Activated CD4-positive, alpha-beta T cell treated with anti-CD3 and anti-CD28 coated beads for 36 hours (primary cell): ENCODE measurements at regions of chr12 and their contacts with region 1.

Region 1: GRCh38 chr12:110888256-110888991 is 32.0 kb downstream of the MYL2 start:
- DNase-seq: no peak
- ATAC-seq: no peak
- H3K4me3 Mint-ChIP-seq: peak overlapping the region; percentile 80
- H3K27ac Mint-ChIP-seq: no peak overlapping the region
- H3K4me1 Mint-ChIP-seq: peaks cover 10% of the 10 kb centered on the region
- H3K27me3 Mint-ChIP-seq: peaks cover 4% of the 10 kb centered on the region

Region 2: DNA sequence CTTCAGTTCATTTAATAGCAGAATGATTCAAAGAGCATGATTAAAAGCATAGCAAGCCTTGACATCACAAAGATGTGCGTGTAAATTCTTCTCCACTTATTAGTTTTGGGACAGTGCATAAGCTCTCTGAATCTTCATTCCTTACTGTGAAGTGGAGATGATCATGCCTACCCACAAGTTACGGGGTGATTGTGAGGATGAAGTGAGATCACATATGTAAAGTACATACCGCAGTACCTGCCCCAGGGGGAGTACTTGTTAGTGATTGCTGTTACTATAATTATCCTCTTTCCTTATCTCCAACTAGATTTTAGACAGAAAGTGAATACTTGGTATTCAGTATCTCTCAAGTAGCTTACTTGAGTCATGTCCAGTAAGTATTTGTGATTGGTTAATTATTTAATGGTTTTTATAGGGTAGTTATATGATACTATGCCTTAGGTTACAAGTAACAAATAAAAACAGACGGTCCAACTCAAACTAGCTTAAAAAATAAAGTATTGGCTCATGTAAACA is 380.3 kb before region 1 on chr12:
- CTCF ChIA-PET with region 1: no interaction called
- POLR2A ChIA-PET with region 1: no interaction called
- intact Hi-C with region 1: loop called (anchors 1 to 5 kb)
- DNase-seq: no peak
- ATAC-seq: no peak
- H3K4me3 Mint-ChIP-seq: no peak overlapping the region
- H3K27ac Mint-ChIP-seq: no peak overlapping the region
- H3K4me1 Mint-ChIP-seq: no peaks in the 10 kb centered on the region
- H3K27me3 Mint-ChIP-seq: no peaks in the 10 kb centered on the region

Region 3: DNA sequence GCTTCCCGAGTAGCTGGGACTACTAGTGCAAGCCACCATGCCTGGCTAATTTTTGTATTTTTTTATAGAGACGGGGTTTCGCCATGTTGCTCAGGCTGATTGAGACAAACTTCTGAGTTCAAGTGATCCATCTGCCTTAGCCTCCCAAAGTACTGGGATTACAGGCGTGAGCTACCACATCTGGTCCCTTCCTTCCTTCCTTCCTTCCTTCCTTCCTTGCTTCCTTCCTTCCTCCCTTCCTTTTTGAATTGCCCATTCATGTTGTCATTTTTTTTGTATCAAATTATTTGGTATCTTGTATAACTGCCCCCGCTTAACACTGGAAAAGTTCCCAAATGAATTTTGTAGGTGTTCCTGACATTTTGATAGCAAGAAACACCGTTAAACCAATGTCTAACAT is 374.6 kb before region 1 on chr12:
- CTCF ChIA-PET with region 1: interaction called, 3 read pairs
- POLR2A ChIA-PET with region 1: no interaction called
- intact Hi-C with region 1: loop called (anchors 1 to 5 kb)
- DNase-seq: no peak
- ATAC-seq: no peak
- H3K4me3 Mint-ChIP-seq: no peak overlapping the region
- H3K27ac Mint-ChIP-seq: no peak overlapping the region
- H3K4me1 Mint-ChIP-seq: no peaks in the 10 kb centered on the region
- H3K27me3 Mint-ChIP-seq: peaks cover 2% of the 10 kb centered on the region

Region 4: GRCh38 chr12:110613771-110614684 is 274.4 kb before region 1 on chr12 and contains the start of gene TCTN1:
- CTCF ChIA-PET with region 1: interaction called, 5 read pairs
- POLR2A ChIA-PET with region 1: no interaction called
- intact Hi-C with region 1: loop called (anchors 5 kb)
- DNase-seq: peak; percentile 99
- ATAC-seq: peak; percentile 99
- H3K4me3 Mint-ChIP-seq: peak within 1 kb of the TSS; percentile 78
- H3K27ac Mint-ChIP-seq: peak within 1 kb of the TSS; percentile 67
- H3K4me1 Mint-ChIP-seq: peaks cover 12% of the 10 kb centered on the region
- H3K27me3 Mint-ChIP-seq: no peaks in the 10 kb centered on the region
- total RNA-seq, gene TCTN1: 7.2 to 7.3 TPM

Region 5: GRCh38 chr12:110619534-110619953 is 268.9 kb before region 1 on chr12:
- CTCF ChIA-PET with region 1: interaction called, 5 read pairs
- POLR2A ChIA-PET with region 1: no interaction called
- intact Hi-C with region 1: loop called (anchors 5 kb)
- DNase-seq: peak; percentile 68
- ATAC-seq: peak; percentile 92
- H3K4me3 Mint-ChIP-seq: peak overlapping the region; percentile 19
- H3K27ac Mint-ChIP-seq: peak overlapping the region; percentile 55
- H3K4me1 Mint-ChIP-seq: peaks cover 20% of the 10 kb centered on the region
- H3K27me3 Mint-ChIP-seq: no peaks in the 10 kb centered on the region

Region 6: DNA sequence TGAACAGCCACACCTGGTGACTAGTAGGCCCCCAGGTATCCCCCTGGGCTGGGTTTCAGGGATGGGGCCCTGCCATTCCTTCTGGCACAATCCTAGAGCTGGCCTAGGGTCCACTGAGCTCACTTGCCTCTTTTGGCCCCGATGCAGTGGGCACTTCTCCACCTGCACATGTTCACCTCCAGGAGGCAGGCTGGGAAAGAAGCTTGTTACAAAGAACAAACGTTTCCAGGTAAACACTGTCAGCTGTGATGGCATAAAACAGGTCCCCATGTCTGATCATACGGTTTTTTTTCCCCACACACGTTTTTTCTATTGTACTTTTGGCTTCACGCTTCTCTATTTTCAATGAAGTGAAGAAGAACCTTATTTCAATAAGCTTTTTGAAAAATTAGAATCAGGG is 183.7 kb before region 1 on chr12:
- CTCF ChIA-PET with region 1: interaction called, 7 read pairs
- POLR2A ChIA-PET with region 1: no interaction called
- intact Hi-C with region 1: loop called (anchors 1 to 10 kb)
- DNase-seq: peak; percentile 43
- ATAC-seq: peak; percentile 39
- H3K4me3 Mint-ChIP-seq: no peak overlapping the region
- H3K27ac Mint-ChIP-seq: no peak overlapping the region
- H3K4me1 Mint-ChIP-seq: no peaks in the 10 kb centered on the region
- H3K27me3 Mint-ChIP-seq: no peaks in the 10 kb centered on the region

Region 7: DNA sequence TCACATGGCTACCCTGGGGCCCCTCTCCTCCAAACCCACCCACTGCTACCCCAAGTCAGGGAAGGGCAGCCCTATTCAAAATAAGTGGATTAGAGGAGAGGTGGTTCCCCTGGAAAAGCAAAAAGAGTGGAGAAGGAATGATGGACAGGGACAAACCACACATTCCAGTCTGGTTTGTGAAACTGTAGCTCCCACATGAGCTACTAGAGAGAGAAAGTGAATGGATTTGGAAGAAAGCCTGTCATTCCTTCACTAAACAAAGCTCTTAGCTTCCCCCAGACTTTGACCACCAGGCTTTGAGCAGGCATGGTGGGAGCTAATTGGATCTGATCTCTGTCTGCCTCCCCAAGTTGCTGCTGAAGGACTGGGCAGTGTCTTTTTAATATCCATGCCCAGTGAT is 13.6 kb before region 1 on chr12:
- CTCF ChIA-PET with region 1: interaction called, 11 read pairs
- POLR2A ChIA-PET with region 1: no interaction called
- intact Hi-C with region 1: no loop called
- DNase-seq: no peak
- ATAC-seq: no peak
- H3K4me3 Mint-ChIP-seq: no peak overlapping the region
- H3K27ac Mint-ChIP-seq: no peak overlapping the region
- H3K4me1 Mint-ChIP-seq: no peaks in the 10 kb centered on the region
- H3K27me3 Mint-ChIP-seq: peaks cover 4% of the 10 kb centered on the region

Region 8: GRCh38 chr12:111807232-111807631 is 918.8 kb after region 1 on chr12:
- CTCF ChIA-PET with region 1: no interaction called
- POLR2A ChIA-PET with region 1: no interaction called
- intact Hi-C with region 1: no loop called
- DNase-seq: no peak
- ATAC-seq: no peak
- H3K4me3 Mint-ChIP-seq: no peak overlapping the region
- H3K27ac Mint-ChIP-seq: no peak overlapping the region
- H3K4me1 Mint-ChIP-seq: no peaks in the 10 kb centered on the region
- H3K27me3 Mint-ChIP-seq: no peaks in the 10 kb centered on the region